Activated CD4-positive, alpha-beta T cell treated with anti-CD3 and anti-CD28 coated beads for 36 hours (primary cell): ENCODE measurements at regions of chr19 and their contacts with region 1.

Region 1: DNA sequence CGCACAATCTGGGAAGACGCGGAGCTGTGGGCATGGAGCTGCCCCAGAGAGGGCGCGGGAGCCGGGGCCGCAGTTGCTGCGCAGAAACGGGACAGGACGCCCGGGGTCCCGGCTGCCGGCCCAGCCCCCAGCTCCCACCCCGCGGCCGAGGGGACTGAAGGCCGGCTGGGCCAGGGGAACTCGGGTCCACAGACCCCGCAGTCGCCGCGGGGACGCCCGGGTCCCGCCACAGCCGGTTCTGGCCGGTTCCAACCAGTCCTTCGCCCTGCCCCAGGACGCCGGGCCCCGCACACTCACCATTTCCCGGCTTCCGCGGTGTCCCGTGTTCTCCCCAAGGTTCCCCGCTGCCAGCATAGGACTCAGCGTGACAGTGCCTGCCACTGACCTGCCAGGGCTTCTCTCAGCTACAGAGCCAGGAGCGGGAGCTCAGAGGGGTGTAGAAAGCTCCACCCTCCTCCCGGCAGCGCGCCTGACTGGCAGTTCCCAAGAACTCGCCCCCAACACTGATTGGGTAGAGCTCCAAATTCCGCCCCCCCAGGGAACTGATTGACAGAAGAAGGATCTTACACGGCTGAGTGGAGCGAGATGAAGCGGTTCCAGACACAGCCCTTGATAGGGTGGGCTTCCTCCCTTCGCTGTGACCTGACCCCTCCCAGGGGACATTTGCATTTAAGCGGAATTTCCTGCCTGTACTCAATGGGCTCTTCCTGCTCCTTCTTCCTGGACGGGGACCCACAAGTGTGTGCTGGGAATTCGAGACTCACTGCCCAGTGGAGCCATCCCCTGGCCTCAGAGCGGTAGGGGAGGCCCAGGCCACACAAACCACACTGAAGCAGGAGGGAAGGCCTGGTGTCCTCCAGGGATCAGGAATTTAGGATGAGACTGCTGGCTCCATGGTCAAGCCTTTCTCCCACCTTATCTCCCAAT is at the start of gene ZNF442:
- DNase-seq: peak; percentile 93
- ATAC-seq: peak; percentile 99
- H3K4me3 Mint-ChIP-seq: peak within 1 kb of the TSS; percentile 93
- H3K27ac Mint-ChIP-seq: peak within 1 kb of the TSS; percentile 79
- H3K4me1 Mint-ChIP-seq: peaks cover 18% of the 10 kb centered on the region
- H3K27me3 Mint-ChIP-seq: no peaks in the 10 kb centered on the region
- total RNA-seq, gene ZNF442: 1.1 to 1.7 TPM

Region 2: GRCh38 chr19:12162882-12163806 is 202.4 kb before region 1 on chr19 and contains the start of gene ZNF136:
- CTCF ChIA-PET with region 1: no interaction called
- POLR2A ChIA-PET with region 1: no interaction called
- intact Hi-C with region 1: loop called in 1 of 2 experiments (anchors 1 kb)
- DNase-seq: peak; percentile 97
- ATAC-seq: peak; percentile 100
- H3K4me3 Mint-ChIP-seq: peak within 1 kb of the TSS; percentile 98
- H3K27ac Mint-ChIP-seq: peak within 1 kb of the TSS; percentile 99
- H3K4me1 Mint-ChIP-seq: peaks cover 38% of the 10 kb centered on the region
- H3K27me3 Mint-ChIP-seq: no peaks in the 10 kb centered on the region
- total RNA-seq, gene ZNF136: 11.7 to 12.9 TPM

Region 3: GRCh38 chr19:12294249-12295158 is 71.0 kb before region 1 on chr19 and contains the start of gene ZNF44:
- CTCF ChIA-PET with region 1: interaction called, 4 read pairs
- POLR2A ChIA-PET with region 1: no interaction called
- intact Hi-C with region 1: loop called in 1 of 2 experiments (anchors 1 kb)
- DNase-seq: peak; percentile 98
- ATAC-seq: peak; percentile 98
- H3K4me3 Mint-ChIP-seq: peak within 1 kb of the TSS; percentile 98
- H3K27ac Mint-ChIP-seq: peak within 1 kb of the TSS; percentile 98
- H3K4me1 Mint-ChIP-seq: peaks cover 32% of the 10 kb centered on the region
- H3K27me3 Mint-ChIP-seq: no peaks in the 10 kb centered on the region
- total RNA-seq, gene ZNF44: 7.3 to 8.1 TPM

Region 4: DNA sequence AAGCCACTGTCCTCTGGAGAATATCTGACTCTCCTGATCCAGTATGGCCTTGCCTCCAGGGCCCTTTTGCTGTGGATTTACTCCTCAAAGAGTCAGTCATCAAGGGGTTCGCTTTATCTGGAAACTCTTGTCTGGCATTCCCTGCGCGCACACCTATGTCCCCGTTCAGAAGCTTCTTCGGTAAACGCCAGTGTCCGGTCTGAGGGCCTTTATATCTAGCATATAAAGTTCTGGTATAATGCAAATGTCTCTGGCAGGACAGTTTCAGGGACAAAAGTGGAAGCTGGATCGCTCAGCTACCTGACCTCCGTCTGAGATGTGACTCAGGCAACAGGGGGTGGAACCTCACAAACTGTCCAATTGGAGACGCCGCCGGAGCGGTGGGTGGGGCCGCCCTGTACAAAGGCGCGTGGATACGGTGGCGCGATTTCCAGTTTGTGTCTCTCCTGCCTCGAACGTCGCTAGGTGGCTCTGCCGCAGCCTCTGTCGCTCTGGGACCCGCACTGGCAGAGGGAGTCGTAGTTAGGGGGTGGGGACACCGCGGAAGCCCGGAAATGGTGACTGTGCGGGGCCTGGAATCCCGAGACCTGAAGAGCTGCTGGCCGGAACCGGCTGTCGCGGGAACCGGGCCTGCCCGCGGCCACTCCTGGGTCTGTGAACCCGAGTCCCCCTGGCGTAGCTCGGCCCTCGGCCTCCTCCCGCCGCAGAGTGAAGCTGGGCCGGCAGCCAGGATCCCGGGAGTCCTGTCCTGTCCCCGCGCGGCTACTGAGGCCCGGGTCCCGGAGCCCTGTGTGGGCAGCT is 129.7 kb after region 1 on chr19:
- CTCF ChIA-PET with region 1: no interaction called
- POLR2A ChIA-PET with region 1: no interaction called
- intact Hi-C with region 1: loop called in 1 of 2 experiments (anchors 1 kb)
- DNase-seq: peak; percentile 97
- ATAC-seq: peak; percentile 100
- H3K4me3 Mint-ChIP-seq: peak overlapping the region; percentile 75
- H3K27ac Mint-ChIP-seq: peak overlapping the region; percentile 71
- H3K4me1 Mint-ChIP-seq: peaks cover 7% of the 10 kb centered on the region
- H3K27me3 Mint-ChIP-seq: no peaks in the 10 kb centered on the region